CD4-positive, alpha-beta T cell (primary cell): ENCODE measurements at regions of chr2 and their contacts with region 1.

Region 1: GRCh38 chr2:98654699-98655495 is 46.5 kb downstream of the UNC50 start:
- DNase-seq: peak in 6 of 14 experiments; percentile 31 to 79 (median 66)
- ATAC-seq: peak; percentile 63
- H3K4me3 ChIP-seq: no peak overlapping the region
- H3K4me3 Mint-ChIP-seq: peak overlapping the region; percentile 81
- H3K27ac ChIP-seq: peak overlapping the region; percentile 68 to 79
- H3K27ac Mint-ChIP-seq: peak overlapping the region; percentile 92
- H3K4me1 ChIP-seq: peaks cover 27% of the 10 kb centered on the region
- H3K4me1 Mint-ChIP-seq: peaks cover 93% of the 10 kb centered on the region
- H3K27me3 ChIP-seq: no peaks in the 10 kb centered on the region
- H3K27me3 Mint-ChIP-seq: no peaks in the 10 kb centered on the region
- CTCF ChIP-seq: no peak

Region 2: DNA sequence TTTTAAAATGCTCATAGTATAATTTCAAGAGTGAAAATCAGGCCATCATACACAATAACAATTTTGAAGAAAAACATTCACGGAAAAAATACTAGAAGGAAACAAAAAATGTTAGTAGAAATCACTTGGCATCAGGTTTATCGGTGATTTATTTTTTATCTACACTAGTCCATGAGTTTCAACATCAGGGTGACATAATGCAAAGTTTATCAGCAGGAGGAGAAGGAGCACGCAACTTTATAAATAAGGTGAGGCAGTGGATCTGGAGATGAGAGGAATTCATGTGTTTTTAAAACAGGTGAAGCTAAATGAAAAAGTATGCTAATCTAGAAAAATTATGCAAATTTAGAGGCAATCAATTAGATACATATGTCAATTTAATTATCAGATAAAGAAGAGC is 21.8 kb after region 1 on chr2:
- CTCF ChIA-PET with region 1: interaction called, 4 read pairs
- POLR2A ChIA-PET with region 1: interaction called, 10 read pairs
- intact Hi-C with region 1: no loop called
- DNase-seq: no peak
- ATAC-seq: no peak
- H3K4me3 ChIP-seq: no peak overlapping the region
- H3K4me3 Mint-ChIP-seq: no peak overlapping the region
- H3K27ac ChIP-seq: no peak overlapping the region
- H3K27ac Mint-ChIP-seq: peak overlapping the region; percentile 64
- H3K4me1 ChIP-seq: peaks cover 6% of the 10 kb centered on the region
- H3K4me1 Mint-ChIP-seq: peaks cover 65% of the 10 kb centered on the region
- H3K27me3 ChIP-seq: no peaks in the 10 kb centered on the region
- H3K27me3 Mint-ChIP-seq: no peaks in the 10 kb centered on the region
- CTCF ChIP-seq: no peak

Region 3: GRCh38 chr2:98691303-98691702 is 36.4 kb after region 1 on chr2:
- CTCF ChIA-PET with region 1: interaction called, 10 read pairs
- POLR2A ChIA-PET with region 1: interaction called, 3 read pairs
- intact Hi-C with region 1: loop called in 1 of 2 experiments (anchors 2 kb)
- DNase-seq: peak in 4 of 14 experiments; percentile 14 to 30 (median 25)
- ATAC-seq: peak; percentile 72
- H3K4me3 ChIP-seq: no peak overlapping the region
- H3K4me3 Mint-ChIP-seq: no peak overlapping the region
- H3K27ac ChIP-seq: peak overlapping the region in 1 of 2 donors; percentile 30
- H3K27ac Mint-ChIP-seq: peak overlapping the region; percentile 92
- H3K4me1 ChIP-seq: peaks cover 65% of the 10 kb centered on the region
- H3K4me1 Mint-ChIP-seq: peaks cover 92% of the 10 kb centered on the region
- H3K27me3 ChIP-seq: no peaks in the 10 kb centered on the region
- H3K27me3 Mint-ChIP-seq: no peaks in the 10 kb centered on the region
- CTCF ChIP-seq: no peak